SK-MEL-5 (cell line): ENCODE measurements at regions of chr7 and their contacts with region 1.

Region 1: DNA sequence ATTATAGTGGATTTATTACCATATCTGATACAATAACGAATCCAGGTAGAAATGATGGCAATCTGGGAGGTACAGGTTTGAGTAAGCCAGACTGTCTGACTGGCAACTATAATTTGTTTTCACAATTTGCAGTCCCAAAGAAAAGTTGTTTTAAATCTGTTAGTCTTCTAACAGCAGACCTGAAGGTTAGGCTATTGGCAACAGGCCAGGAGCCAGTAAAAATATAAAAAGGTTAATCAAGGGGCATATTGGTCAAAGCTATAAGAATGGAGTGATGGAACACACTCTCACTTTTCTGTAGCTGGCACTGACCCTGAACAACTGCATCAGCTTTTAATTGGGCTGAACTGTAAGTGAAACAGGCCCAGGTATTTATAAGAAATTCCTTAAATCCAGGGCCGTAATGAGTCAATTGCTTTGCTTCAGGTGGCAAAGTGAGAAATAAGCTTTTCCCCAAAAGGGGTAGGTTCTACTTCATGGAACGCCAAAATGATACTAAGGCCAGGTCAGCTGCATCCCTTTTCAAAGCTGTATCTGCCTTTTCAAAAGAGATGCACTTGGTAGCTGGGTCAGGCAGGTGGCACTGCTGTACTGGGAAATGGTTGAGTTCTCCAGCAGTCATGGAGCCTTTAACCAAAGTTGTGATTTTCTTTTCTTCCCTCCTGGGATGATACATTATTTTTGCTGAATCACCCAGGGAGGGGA is 7.0 kb upstream of the GPR22 start:
- DNase-seq: peak; percentile 84

Region 2: GRCh38 chr7:107359520-107360316 is 103.2 kb before region 1 on chr7:
- in situ Hi-C with region 1: loop called (anchors 10 kb)
- DNase-seq: no peak

Region 3: GRCh38 chr7:107879400-107880035 is 416.6 kb after region 1 on chr7:
- in situ Hi-C with region 1: loop called (anchors 10 kb)
- DNase-seq: peak; percentile 81